ENCODE measurements at regions of chr7 and their contacts with region 1.

Region 1: GRCh38 chr7:150631866-150632864 is at the start of gene GIMAP6:
- DNase-seq: peak in 2 of 3 donors; percentile 35 to 67
- ATAC-seq: peak; percentile 56 to 76
- H3K4me3 ChIP-seq: peak within 1 kb of the TSS; percentile 55
- H3K27ac ChIP-seq: peak within 1 kb of the TSS; percentile 93
- H3K4me1 ChIP-seq: peaks cover 20% of the 10 kb centered on the region
- H3K27me3 ChIP-seq: no peaks in the 10 kb centered on the region
- total RNA-seq, gene GIMAP6: 22.1 to 29.1 (median 22.9) TPM

Region 2: GRCh38 chr7:150448789-150449147 is 183.4 kb before region 1 on chr7:
- intact Hi-C with region 1: loop called in 1 of 4 experiments (anchors 2 kb)
- DNase-seq: peak; percentile 74 to 92 (median 88)
- ATAC-seq: peak; percentile 53 to 56
- H3K4me3 ChIP-seq: no peak overlapping the region
- H3K27ac ChIP-seq: no peak overlapping the region
- H3K4me1 ChIP-seq: peaks cover 5% of the 10 kb centered on the region
- H3K27me3 ChIP-seq: no peaks in the 10 kb centered on the region

Region 3: DNA sequence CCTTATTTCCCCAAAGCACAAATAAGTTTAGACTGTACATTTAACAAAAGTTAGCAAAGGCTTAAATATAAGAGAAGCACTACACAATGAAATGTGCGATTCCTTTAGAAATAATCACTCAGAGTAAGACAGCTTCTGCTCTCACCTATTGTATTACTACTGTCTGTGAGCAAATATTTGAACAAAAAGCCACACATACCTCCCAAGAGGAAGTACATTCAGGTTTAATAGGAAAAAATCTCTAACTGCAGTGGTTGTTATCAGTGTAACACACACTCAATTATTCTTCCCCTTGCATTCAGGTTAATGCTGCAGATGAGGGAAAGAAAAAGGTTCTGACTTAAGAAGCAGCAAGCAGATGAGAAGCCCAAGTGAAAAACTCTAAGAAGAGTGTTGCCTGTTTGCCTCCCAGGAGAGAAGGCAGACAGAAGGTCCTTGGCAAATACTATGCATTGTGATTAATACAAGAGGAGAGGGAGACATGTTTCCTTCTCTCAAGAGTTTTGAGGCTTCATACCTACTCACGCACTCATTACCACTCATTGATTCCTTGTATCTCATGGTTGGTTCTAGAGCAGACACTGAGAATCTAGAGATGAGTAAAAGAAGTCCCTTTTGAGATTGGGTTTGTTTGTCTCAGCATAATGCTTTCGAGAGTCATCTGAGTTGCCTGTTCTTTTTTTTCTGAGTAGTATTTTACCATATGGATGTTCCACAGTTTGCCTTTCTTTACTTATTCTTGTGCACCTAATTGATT is 51.3 kb before region 1 on chr7:
- intact Hi-C with region 1: loop called in 2 of 4 experiments (anchors 5 kb)
- DNase-seq: no peak
- ATAC-seq: no peak
- H3K4me3 ChIP-seq: no peak overlapping the region
- H3K27ac ChIP-seq: no peak overlapping the region
- H3K4me1 ChIP-seq: peaks cover 7% of the 10 kb centered on the region
- H3K27me3 ChIP-seq: no peaks in the 10 kb centered on the region

Region 4: GRCh38 chr7:150586785-150587152 is 45.4 kb before region 1 on chr7:
- intact Hi-C with region 1: loop called in 2 of 4 experiments (anchors 5 kb)
- DNase-seq: no peak
- ATAC-seq: peak; percentile 92 to 98
- H3K4me3 ChIP-seq: no peak overlapping the region
- H3K27ac ChIP-seq: peak overlapping the region; percentile 90
- H3K4me1 ChIP-seq: peaks cover 11% of the 10 kb centered on the region
- H3K27me3 ChIP-seq: no peaks in the 10 kb centered on the region

Region 5: DNA sequence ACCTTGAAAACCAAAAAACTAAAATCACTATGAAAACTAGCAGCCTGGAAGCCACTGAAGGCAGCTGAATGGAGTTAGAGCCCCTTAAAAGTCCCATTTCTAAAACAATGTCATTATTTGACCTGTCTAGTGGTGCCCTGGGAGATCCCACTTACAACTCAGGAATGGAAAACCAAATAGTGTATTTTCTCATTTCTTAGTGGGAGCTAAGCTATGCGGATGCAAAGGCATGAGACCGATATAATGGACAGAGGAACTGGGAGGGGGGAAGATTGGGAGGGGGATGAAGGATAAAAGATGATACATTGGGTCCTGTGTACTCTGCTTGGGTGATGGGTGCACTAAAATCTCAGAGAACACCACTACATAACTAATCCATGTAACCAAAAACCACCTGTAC is 43.5 kb after region 1 on chr7:
- intact Hi-C with region 1: loop called in 1 of 4 experiments (anchors 2 kb)
- DNase-seq: no peak
- ATAC-seq: no peak
- H3K4me3 ChIP-seq: no peak overlapping the region
- H3K27ac ChIP-seq: peak overlapping the region; percentile 20
- H3K4me1 ChIP-seq: no peaks in the 10 kb centered on the region
- H3K27me3 ChIP-seq: no peaks in the 10 kb centered on the region

Region 6: DNA sequence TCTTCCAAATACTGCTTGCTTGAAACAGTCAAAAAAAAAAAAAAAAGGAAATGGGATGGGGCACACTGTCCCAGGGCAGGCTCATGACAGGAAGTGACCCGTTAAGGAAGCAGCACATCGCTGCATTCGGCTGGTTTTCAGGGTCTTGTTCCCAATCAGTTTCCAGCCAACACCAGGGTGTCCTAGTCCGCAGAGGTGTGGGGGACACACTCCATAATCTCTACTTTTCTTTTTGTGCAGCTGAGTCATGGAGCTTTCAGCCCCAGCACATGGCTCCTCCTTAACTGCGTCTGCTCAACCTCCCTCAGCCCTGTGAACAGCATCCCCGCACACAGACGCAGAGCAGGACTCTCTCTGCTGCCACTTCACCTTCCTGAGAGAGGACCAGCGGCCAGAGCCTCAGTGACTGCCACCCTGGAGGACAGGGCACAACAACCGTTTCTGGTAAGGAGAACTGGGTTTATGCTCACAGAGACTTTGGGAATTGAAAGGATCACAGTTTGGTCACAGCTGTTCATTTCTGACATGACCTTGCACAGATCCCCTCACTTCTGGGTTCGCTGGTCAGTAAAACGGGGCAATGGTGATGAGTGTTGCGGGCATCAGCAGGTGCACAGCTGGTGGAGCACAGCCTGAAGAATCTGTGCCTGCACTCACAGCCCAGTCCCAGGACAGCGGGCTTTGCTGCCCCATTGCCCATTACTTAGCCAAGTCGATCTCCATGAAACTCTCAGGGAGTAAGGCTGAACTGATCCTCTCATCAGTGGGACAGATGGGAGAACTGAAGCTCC is 105.3 kb after region 1 on chr7 and contains the start of gene GIMAP5:
- intact Hi-C with region 1: loop called in 1 of 4 experiments (anchors 5 kb)
- DNase-seq: peak in 1 of 3 donors; percentile 65
- ATAC-seq: peak; percentile 73 to 81
- H3K4me3 ChIP-seq: peak within 1 kb of the TSS; percentile 50
- H3K27ac ChIP-seq: peak within 1 kb of the TSS; percentile 54
- H3K4me1 ChIP-seq: peaks cover 4% of the 10 kb centered on the region
- H3K27me3 ChIP-seq: no peaks in the 10 kb centered on the region
- total RNA-seq, gene GIMAP5: 9.3 to 24.2 (median 11.1) TPM

Region 7: GRCh38 chr7:150820578-150821198 is 188.5 kb after region 1 on chr7:
- intact Hi-C with region 1: no loop called
- DNase-seq: no peak
- ATAC-seq: no peak
- H3K4me3 ChIP-seq: no peak overlapping the region
- H3K27ac ChIP-seq: no peak overlapping the region
- H3K4me1 ChIP-seq: no peaks in the 10 kb centered on the region
- H3K27me3 ChIP-seq: no peaks in the 10 kb centered on the region

Region 8: DNA sequence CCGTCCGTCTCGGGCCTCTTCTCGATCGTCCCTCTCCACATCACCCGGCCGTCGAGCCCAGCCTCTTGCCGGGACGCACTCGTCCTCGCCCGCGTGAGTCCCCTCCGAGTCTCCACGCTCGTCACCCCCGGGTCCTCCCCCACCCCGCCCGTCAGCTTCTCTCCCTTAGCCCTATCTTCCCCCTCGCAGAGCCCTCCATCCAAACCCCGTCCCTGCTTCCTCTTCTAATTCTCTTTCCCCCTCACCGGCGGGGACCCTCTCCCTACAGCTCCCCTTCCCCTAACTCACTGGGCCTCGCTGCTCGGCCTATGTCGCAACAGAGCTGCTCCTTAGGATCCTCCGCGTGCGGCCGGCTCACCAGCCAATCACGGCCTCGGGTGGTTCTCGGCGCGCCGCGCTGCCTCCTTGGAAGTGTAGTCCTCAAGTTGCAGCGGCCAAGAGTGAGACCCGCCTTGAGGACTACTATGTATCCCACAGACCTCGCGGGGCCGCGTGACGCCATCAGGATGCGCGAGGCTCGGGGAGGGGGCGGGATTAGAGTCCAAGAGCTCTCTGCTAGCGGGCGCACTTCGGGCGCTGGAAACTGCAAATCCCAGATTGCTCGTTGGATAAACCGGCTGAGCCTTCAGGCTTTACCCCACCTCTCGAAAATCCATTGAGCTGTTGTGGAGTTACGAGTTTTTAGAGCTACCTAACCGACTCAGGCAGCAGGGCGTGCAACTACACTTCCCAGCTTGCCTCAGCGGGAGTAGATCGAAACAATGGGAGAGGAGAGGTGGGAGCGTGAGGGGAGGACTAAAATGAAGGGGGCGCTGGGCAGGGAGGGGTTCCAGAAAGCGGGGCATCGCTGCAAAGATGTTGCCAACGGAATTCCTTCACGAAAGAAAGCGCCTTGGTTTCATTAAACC is 595.0 kb after region 1 on chr7 and contains the start of gene ABCF2:
- intact Hi-C with region 1: no loop called
- DNase-seq: peak; percentile 99 to 100 (median 100)
- ATAC-seq: peak; percentile 99
- H3K4me3 ChIP-seq: peak within 1 kb of the TSS; percentile 83
- H3K27ac ChIP-seq: peak within 1 kb of the TSS; percentile 87
- H3K4me1 ChIP-seq: peaks cover 6% of the 10 kb centered on the region
- H3K27me3 ChIP-seq: no peaks in the 10 kb centered on the region
- total RNA-seq, gene ABCF2: 24.6 to 34.5 (median 26.3) TPM

Measured in right cardiac atrium (tissue), 5 donors.